CD4-positive, alpha-beta memory T cell (primary cell): ENCODE measurements at regions of chr5 and their contacts with region 1.

Region 1: GRCh38 chr5:163459922-163460766 is at the starts of genes HMMR and NUDCD2:
- DNase-seq: peak; percentile 97 to 99 (median 98)
- H3K4me3 ChIP-seq: peak within 1 kb of the TSS; percentile 68 to 99
- H3K4me3 Mint-ChIP-seq: peak within 1 kb of the TSS; percentile 94 to 99 (median 96)
- H3K27ac ChIP-seq: peak within 1 kb of the TSS; percentile 96
- H3K27ac Mint-ChIP-seq: peak within 1 kb of the TSS; percentile 98 to 100 (median 99)
- H3K4me1 ChIP-seq: peaks cover 50% of the 10 kb centered on the region
- H3K4me1 Mint-ChIP-seq: peaks cover 25 to 61% (median 42%) of the 10 kb centered on the region in 4 donors
- H3K27me3 ChIP-seq: no peaks in the 10 kb centered on the region
- H3K27me3 Mint-ChIP-seq: no peaks in the 10 kb centered on the region
- total RNA-seq, gene HMMR: 0.11 to 0.15 TPM
- total RNA-seq, gene NUDCD2: 26.0 to 26.4 TPM

Region 2: GRCh38 chr5:163437309-163438182 is 22.6 kb before region 1 on chr5 and contains the start of gene CCNG1:
- CTCF ChIA-PET with region 1: interaction called, 60 read pairs
- POLR2A ChIA-PET with region 1: interaction called, 147 read pairs
- intact Hi-C with region 1: loop called (anchors 1 kb)
- DNase-seq: peak; percentile 86 to 91 (median 88)
- H3K4me3 ChIP-seq: peak within 1 kb of the TSS; percentile 85 to 87
- H3K4me3 Mint-ChIP-seq: peak within 1 kb of the TSS; percentile 88 to 97 (median 94)
- H3K27ac ChIP-seq: peak within 1 kb of the TSS; percentile 87
- H3K27ac Mint-ChIP-seq: peak within 1 kb of the TSS; percentile 91 to 99 (median 94)
- H3K4me1 ChIP-seq: peaks cover 45% of the 10 kb centered on the region
- H3K4me1 Mint-ChIP-seq: peaks cover 26 to 52% (median 40%) of the 10 kb centered on the region in 4 donors
- H3K27me3 ChIP-seq: no peaks in the 10 kb centered on the region
- H3K27me3 Mint-ChIP-seq: peaks cover 1% of the 10 kb centered on the region in 2 donors
- total RNA-seq, gene CCNG1: 132 to 133 TPM

Region 3: DNA sequence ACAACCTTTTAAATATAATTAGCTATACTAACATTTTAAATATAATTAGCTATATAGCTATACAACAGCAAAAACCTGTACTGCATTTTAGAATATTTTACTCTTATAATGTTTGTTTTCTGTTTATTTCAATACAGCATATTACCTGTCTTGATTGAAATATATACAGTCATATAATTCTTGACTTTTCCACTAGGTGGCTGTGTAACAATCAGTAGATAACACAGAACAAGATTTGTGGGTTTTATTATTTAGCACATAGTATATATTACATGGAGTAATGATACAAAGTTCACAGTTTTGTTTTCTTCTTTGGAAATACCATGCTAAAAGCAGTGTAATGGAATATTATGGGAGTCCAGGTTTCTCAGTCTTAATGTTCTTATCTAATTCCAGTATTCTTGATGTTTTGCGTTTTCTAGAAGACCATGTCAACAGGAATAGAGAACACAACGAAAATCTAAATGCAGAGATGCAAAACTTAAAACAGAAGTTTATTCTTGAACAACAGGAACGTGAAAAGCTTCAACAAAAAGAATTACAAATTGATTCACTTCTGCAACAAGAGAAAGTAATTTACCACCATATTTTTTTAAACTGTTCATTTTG is 13.6 kb after region 1 on chr5:
- CTCF ChIA-PET with region 1: interaction called, 17 read pairs
- POLR2A ChIA-PET with region 1: interaction called, 13 read pairs
- intact Hi-C with region 1: loop called (anchors 1 kb)
- DNase-seq: peak in 3 of 5 donors; percentile 23 to 39 (median 35)
- H3K4me3 ChIP-seq: no peak overlapping the region
- H3K4me3 Mint-ChIP-seq: no peak overlapping the region
- H3K27ac ChIP-seq: no peak overlapping the region
- H3K27ac Mint-ChIP-seq: peak overlapping the region in 1 of 7 donors; percentile 47
- H3K4me1 ChIP-seq: no peaks in the 10 kb centered on the region
- H3K4me1 Mint-ChIP-seq: peaks cover 0 to 7% (median 6%) of the 10 kb centered on the region in 4 donors
- H3K27me3 ChIP-seq: no peaks in the 10 kb centered on the region
- H3K27me3 Mint-ChIP-seq: no peaks in the 10 kb centered on the region